Tibial artery (tissue), 4 donors: ENCODE measurements at regions of chr7 and their contacts with region 1.

Region 1: DNA sequence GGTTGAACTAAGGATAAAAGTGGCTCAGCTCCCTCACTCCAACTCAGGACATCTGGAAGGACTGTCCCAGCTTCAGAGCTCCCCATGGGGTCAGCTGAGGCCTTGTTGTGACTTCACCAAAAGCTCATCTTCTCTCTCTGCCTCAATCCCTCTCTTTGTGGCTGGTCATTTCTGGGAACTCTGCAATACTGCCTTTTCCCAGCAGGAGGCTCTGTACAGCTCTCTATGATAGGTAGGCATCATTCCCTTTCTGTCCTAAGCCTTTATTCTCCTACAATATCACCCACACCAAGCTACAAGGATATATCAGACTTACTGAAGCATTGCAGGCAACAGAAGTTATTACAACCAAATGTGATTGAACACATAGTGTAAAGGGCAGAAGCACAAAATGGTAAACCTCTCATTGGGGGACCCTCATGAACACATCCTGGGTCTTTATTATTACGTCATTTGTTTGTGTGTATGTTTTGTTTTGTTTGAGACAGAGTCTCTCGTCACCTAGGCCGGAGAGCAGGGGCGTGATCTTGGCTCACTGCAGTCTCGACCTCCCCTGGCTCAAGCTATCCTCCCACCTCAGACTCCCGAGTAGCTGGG is 36.7 kb upstream of the PRPS1L1 start:
- DNase-seq: no peak
- H3K4me3 ChIP-seq: no peak overlapping the region
- H3K27ac ChIP-seq: no peak overlapping the region
- H3K4me1 ChIP-seq: no peaks in the 10 kb centered on the region
- H3K27me3 ChIP-seq: no peaks in the 10 kb centered on the region
- CTCF ChIP-seq: peak; percentile 47 to 49

Region 2: DNA sequence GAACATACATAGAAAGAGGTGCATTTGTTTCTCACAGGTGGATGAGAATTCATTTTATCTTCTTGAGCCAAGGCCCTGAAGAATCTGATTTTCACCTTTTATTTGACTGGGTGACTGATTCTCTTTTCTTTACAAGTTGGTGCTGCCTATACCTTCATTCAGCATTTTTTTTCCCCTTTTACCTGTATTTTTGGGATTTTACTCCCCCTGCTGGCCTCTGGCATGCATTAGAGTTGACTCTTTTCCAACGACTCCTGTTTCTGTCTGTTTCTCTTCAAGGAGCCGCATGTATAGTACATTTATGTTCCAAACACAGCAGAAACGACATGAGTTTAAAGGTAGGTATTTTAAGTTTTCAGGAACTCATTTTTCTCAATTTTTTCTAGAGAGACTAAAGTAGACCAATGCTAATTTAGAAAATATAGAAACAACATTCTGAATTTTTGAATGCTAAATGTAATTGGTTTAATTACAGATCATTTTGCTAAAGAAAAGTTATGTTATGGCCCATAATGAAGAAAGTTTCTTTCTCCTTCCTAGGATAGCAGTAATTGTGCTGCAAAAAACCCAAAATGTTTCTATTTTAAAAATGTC is 281.4 kb after region 1 on chr7:
- intact Hi-C with region 1: loop called (anchors 10 kb)
- DNase-seq: no peak
- H3K4me3 ChIP-seq: no peak overlapping the region
- H3K27ac ChIP-seq: no peak overlapping the region
- H3K4me1 ChIP-seq: peaks cover 0 to 3% (median 0%) of the 10 kb centered on the region in 4 donors
- H3K27me3 ChIP-seq: no peaks in the 10 kb centered on the region
- CTCF ChIP-seq: peak; percentile 61 to 77